ENCODE measurements at regions of chr9 and their contacts with region 1.

Region 1: DNA sequence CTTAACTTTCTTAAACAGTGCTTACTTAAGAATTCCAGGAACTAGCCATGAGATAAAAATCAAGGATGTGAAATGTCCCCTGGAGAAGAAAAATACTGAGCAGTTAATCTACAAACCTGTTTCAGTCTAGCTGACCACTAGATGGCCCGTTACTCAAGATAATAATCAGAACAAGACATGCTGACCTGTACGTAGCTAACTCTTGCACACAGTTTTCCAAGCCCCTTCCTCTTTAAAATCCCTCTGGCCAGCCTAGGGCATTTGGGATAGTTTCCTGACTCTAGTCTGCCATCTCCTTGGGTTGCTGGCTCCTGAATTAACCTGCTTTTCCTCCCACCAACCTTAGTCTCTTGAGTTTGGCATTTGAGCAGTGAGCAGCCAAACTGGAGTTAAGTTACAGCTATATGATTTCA is 59.2 kb upstream of the TRAF1 start:
- DNase-seq: peak; percentile 28
- ATAC-seq: peak; percentile 87
- H3K4me3 ChIP-seq: no peak overlapping the region
- H3K27ac ChIP-seq: no peak overlapping the region
- H3K4me1 ChIP-seq: no peaks in the 10 kb centered on the region
- H3K27me3 ChIP-seq: no peaks in the 10 kb centered on the region
- CTCF ChIP-seq: peak; percentile 70

Region 2: DNA sequence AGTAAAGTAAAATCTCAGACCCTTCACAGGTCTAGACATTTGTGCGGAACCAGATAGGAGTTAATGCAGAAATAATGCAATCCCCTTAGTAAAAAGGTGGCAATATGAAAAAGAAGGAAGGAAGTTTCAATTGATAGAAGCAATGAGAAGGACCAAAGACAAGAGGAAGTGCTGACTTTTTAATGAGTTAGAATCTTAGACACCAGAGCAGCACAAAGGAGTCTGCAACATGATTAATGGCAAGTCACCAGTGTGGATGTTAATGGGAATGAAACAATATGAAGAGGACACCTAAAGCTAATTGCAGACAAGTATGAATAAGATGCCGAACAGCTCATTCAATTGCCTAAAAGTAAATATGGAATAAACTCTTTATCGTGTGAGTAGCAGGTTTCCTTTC is 322.4 kb before region 1 on chr9:
- CTCF ChIA-PET with region 1: no interaction called
- POLR2A ChIA-PET with region 1: no interaction called
- in situ Hi-C with region 1: no loop called
- intact Hi-C with region 1: no loop called
- DNase-seq: no peak
- ATAC-seq: no peak
- H3K4me3 ChIP-seq: no peak overlapping the region
- H3K27ac ChIP-seq: no peak overlapping the region
- H3K4me1 ChIP-seq: no peaks in the 10 kb centered on the region
- H3K27me3 ChIP-seq: no peaks in the 10 kb centered on the region
- CTCF ChIP-seq: no peak

Region 3: DNA sequence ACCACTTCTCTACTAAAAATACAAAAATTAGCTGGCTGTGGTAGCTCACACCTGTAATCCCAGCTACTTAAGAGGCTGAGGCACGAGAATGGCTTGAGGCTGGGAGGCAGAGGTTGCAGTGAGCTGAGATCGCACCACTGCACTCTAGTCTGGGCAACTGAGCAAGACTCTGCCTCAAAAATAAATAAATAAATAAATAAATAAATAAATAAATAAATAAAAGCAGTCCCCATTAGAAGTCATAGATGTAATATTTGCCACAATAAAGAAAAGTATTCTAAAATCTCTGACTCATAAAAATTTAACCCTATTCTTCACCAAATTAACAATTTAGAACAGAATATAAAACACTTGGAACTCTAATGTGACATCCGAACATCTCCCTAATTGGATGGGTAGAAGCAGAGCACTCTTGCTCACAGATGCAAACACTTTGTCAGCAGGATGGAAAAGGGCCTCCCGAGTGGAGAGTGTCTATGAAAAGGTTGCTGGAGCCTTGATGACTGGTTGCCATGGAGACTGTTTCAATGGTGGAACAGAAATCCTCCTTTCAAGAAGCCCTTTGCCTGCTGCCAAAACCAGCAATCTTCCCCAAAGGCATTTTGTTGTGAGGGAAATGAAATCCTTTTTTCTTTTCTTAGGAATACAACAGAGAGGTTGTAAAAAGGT is 20.3 kb before region 1 on chr9:
- CTCF ChIA-PET with region 1: no interaction called
- POLR2A ChIA-PET with region 1: no interaction called
- in situ Hi-C with region 1: no loop called
- intact Hi-C with region 1: no loop called
- DNase-seq: no peak
- ATAC-seq: no peak
- H3K4me3 ChIP-seq: no peak overlapping the region
- H3K27ac ChIP-seq: no peak overlapping the region
- H3K4me1 ChIP-seq: no peaks in the 10 kb centered on the region
- H3K27me3 ChIP-seq: no peaks in the 10 kb centered on the region
- CTCF ChIP-seq: no peak

Region 4: DNA sequence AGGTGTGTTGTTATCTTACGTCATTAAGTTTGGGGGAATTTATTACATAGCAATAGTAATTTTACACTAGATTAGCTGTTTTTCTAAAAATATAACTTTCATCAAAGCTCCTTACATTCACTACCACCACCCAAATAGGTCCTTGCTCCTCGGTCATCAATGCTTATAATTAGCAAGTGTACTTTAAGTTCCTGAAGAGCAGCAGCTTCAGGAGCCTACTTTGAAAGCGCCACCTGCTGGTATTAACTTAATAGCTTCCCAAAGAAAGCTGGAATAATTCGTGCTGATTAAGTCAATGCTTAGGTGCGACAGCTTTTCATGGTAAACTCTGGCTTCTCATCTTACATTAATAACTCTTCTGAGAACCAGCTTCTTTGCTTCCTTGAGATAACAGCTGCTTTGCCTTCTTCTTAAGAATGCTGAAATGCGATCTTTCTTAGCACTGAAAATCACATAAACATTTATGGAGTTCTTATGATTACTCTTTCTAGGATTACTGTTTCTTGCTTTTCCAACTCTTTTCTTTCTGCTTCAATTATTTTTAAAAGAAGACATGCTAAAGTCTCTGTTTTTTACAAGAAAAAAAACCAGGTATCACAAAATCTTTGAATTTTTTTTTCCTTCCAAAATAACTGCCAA is 74.3 kb after region 1 on chr9:
- CTCF ChIA-PET with region 1: interaction called, 20 read pairs
- POLR2A ChIA-PET with region 1: no interaction called
- in situ Hi-C with region 1: no loop called
- intact Hi-C with region 1: loop called (anchors 2 kb)
- DNase-seq: peak; percentile 33
- ATAC-seq: no peak
- H3K4me3 ChIP-seq: no peak overlapping the region
- H3K27ac ChIP-seq: no peak overlapping the region
- H3K4me1 ChIP-seq: no peaks in the 10 kb centered on the region
- H3K27me3 ChIP-seq: no peaks in the 10 kb centered on the region
- CTCF ChIP-seq: peak; percentile 74

Measured in Panc1 (cell line).